Activated CD4-positive, alpha-beta T cell treated with anti-CD3 and anti-CD28 coated beads for 36 hours (primary cell): ENCODE measurements at regions of chr4 and their contacts with region 1.

Region 1: DNA sequence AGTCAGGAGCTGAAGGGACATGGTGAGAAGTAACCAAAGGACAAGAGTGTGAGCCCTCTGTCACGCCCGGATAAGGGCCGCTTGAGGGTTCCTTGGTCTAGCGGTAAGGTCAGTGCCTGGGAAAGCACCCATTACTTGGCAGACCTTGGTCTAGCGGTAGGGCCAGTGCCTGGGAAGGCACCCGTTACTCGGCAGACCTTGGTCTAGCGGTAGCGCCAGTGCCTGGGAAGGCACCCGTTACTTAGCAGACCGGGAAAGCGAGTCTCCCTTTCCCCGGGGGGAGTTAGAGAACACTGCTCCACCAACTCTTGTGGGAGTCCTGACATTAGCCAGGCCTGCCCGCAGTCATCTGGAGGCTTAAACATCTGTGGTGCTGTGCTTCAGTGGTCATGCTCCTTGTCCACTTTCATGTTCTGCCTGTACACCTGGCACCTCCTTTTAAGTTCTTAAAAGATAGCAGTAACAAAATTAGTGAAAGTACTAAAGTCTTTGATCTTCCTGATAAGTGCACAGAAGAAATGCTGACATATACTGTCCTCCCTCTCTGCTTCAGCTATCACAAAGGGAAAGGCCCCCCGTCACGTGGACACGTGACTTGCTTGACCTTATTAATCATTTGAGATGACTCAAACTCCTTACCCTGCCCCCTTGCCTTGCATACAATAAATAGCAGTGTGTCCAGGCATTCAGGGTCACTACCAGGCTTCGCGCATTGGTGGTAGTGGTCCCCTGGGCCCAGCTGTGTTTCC is 9.3 kb upstream of the SEC24B start:
- DNase-seq: no peak
- ATAC-seq: no peak
- H3K4me3 Mint-ChIP-seq: no peak overlapping the region
- H3K27ac Mint-ChIP-seq: no peak overlapping the region
- H3K4me1 Mint-ChIP-seq: peaks cover 13% of the 10 kb centered on the region
- H3K27me3 Mint-ChIP-seq: no peaks in the 10 kb centered on the region

Region 2: GRCh38 chr4:109658871-109659410 is 234.7 kb after region 1 on chr4:
- CTCF ChIA-PET with region 1: interaction called, 3 read pairs
- POLR2A ChIA-PET with region 1: no interaction called
- intact Hi-C with region 1: loop called in 1 of 2 experiments (anchors 2 kb)
- DNase-seq: peak; percentile 29
- ATAC-seq: no peak
- H3K4me3 Mint-ChIP-seq: no peak overlapping the region
- H3K27ac Mint-ChIP-seq: peak overlapping the region; percentile 37
- H3K4me1 Mint-ChIP-seq: peaks cover 36% of the 10 kb centered on the region
- H3K27me3 Mint-ChIP-seq: no peaks in the 10 kb centered on the region

Region 3: GRCh38 chr4:109803924-109804571 is 379.8 kb after region 1 on chr4:
- CTCF ChIA-PET with region 1: interaction called, 5 read pairs
- POLR2A ChIA-PET with region 1: no interaction called
- intact Hi-C with region 1: loop called (anchors 1 to 2 kb)
- DNase-seq: peak; percentile 25
- ATAC-seq: no peak
- H3K4me3 Mint-ChIP-seq: no peak overlapping the region
- H3K27ac Mint-ChIP-seq: no peak overlapping the region
- H3K4me1 Mint-ChIP-seq: no peaks in the 10 kb centered on the region
- H3K27me3 Mint-ChIP-seq: peaks cover 2% of the 10 kb centered on the region

Region 4: DNA sequence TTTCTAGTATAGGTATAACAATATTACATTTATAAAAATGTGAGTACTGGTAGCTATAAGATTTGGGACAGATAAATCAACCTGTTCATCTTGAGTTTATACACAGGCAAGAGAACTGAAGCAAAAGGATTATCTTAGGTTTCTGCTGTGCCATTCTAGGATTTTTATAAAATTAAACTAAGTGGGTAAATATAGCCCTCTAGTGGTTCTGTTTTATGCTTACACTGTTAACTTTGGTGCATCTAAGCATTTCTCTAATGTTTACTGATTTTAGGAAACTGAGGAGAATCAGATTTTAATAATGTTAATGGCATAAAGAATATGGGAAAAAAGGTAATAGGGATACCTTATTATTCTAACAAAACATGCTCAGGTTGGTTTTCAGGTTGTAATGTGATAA is 402.5 kb after region 1 on chr4:
- CTCF ChIA-PET with region 1: interaction called, 17 read pairs
- POLR2A ChIA-PET with region 1: no interaction called
- intact Hi-C with region 1: loop called in 1 of 2 experiments (anchors 1 kb)
- DNase-seq: no peak
- ATAC-seq: no peak
- H3K4me3 Mint-ChIP-seq: no peak overlapping the region
- H3K27ac Mint-ChIP-seq: no peak overlapping the region
- H3K4me1 Mint-ChIP-seq: peaks cover 8% of the 10 kb centered on the region
- H3K27me3 Mint-ChIP-seq: no peaks in the 10 kb centered on the region

Region 5: DNA sequence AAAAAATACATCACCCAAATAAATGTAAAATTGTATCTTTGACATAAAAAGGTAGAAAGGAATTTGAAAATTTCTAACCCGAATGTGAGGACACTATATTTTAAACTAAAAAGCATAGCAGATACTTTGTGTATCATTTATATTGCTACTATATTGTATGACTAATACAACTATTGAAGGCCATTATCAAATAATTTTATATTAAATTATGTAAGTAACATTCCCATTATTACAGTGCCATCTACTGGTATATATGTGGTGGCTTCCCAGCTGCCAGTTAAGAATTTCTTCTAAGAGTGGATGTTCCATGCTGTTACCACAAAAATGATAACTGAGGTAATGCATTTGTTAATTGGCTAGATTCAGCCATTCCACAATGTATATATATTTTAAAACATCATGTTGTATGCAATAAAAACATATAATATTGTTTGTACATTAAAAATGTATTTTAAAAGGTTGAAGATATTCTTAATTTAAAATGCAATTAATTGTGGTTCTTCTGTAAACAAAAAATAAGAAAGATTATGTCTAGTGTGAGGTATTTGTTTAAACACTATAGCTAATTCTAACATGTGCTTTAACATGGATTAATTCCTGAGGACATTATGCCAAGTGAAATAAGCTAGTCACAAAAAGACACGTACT is 553.7 kb after region 1 on chr4:
- CTCF ChIA-PET with region 1: interaction called, 4 read pairs
- POLR2A ChIA-PET with region 1: no interaction called
- intact Hi-C with region 1: loop called (anchors 1 kb)
- DNase-seq: no peak
- ATAC-seq: no peak
- H3K4me3 Mint-ChIP-seq: no peak overlapping the region
- H3K27ac Mint-ChIP-seq: no peak overlapping the region
- H3K4me1 Mint-ChIP-seq: no peaks in the 10 kb centered on the region
- H3K27me3 Mint-ChIP-seq: peaks cover 12% of the 10 kb centered on the region

Region 6: GRCh38 chr4:109998867-109999584 is 574.8 kb after region 1 on chr4:
- CTCF ChIA-PET with region 1: no interaction called
- POLR2A ChIA-PET with region 1: no interaction called
- intact Hi-C with region 1: loop called in 1 of 2 experiments (anchors 5 kb)
- DNase-seq: no peak
- ATAC-seq: peak; percentile 31
- H3K4me3 Mint-ChIP-seq: no peak overlapping the region
- H3K27ac Mint-ChIP-seq: no peak overlapping the region
- H3K4me1 Mint-ChIP-seq: peaks cover 10% of the 10 kb centered on the region
- H3K27me3 Mint-ChIP-seq: peaks cover 9% of the 10 kb centered on the region